ENCODE measurements at regions of chr15 and their contacts with region 1.

Region 1: GRCh38 chr15:60708684-60709083 is 229.7 kb upstream of the ICE2 start:
- DNase-seq: no peak
- H3K4me3 Mint-ChIP-seq: no peak overlapping the region
- H3K27ac Mint-ChIP-seq: no peak overlapping the region
- H3K4me1 Mint-ChIP-seq: peaks cover 29% of the 10 kb centered on the region
- H3K27me3 Mint-ChIP-seq: no peaks in the 10 kb centered on the region

Region 2: GRCh38 chr15:60682615-60683014 is 26.1 kb before region 1 on chr15:
- CTCF ChIA-PET with region 1: no interaction called
- POLR2A ChIA-PET with region 1: no interaction called
- DNase-seq: no peak
- H3K4me3 Mint-ChIP-seq: no peak overlapping the region
- H3K27ac Mint-ChIP-seq: no peak overlapping the region
- H3K4me1 Mint-ChIP-seq: no peaks in the 10 kb centered on the region
- H3K27me3 Mint-ChIP-seq: no peaks in the 10 kb centered on the region

Region 3: GRCh38 chr15:60720493-60721256 is 12.0 kb after region 1 on chr15:
- CTCF ChIA-PET with region 1: interaction called, 5 read pairs
- POLR2A ChIA-PET with region 1: interaction called, 40 read pairs
- DNase-seq: peak; percentile 46
- H3K4me3 Mint-ChIP-seq: peak overlapping the region; percentile 48
- H3K27ac Mint-ChIP-seq: peak overlapping the region; percentile 73
- H3K4me1 Mint-ChIP-seq: peaks cover 43% of the 10 kb centered on the region
- H3K27me3 Mint-ChIP-seq: peaks cover 2% of the 10 kb centered on the region

Region 4: DNA sequence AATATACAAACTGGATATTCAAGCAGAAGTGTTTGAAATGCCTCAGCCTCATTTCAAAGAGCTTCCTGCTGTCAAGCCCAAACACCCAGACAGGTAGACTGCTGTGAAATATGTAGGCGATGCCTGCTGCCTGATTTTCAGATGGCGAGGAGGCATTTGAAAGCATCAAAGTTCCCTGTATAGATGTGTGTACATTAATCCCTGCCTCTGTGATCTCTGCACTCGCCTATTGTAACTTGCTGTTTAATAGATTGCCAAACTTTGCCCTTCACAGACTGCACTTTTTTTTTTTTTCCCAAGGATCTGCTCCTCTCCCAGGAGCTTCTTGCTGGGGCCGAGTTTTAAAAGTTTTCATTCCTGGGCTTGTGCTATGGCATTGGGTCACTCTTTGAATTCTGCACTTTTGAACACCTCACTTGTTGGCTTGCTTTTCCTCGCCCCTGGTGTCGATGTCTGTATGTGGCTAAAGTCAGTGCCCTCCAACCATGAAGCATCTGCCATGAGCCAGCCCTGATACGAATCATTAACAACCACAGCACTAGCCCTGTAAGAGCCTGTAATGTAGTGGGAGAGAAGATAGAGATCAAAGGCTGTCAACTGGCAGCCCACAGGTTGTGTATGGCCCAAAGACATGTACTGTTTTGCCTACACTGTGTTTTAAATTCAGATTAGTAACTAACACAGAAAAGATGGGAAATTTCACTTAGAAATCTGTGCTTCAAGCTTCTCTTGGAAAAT is 57.9 kb after region 1 on chr15:
- CTCF ChIA-PET with region 1: no interaction called
- POLR2A ChIA-PET with region 1: no interaction called
- DNase-seq: no peak
- H3K4me3 Mint-ChIP-seq: no peak overlapping the region
- H3K27ac Mint-ChIP-seq: no peak overlapping the region
- H3K4me1 Mint-ChIP-seq: peaks cover 3% of the 10 kb centered on the region
- H3K27me3 Mint-ChIP-seq: peaks cover 2% of the 10 kb centered on the region

Measured in activated CD4-positive, alpha-beta memory T cell treated with anti-CD3 and anti-CD28 coated beads, Interleukin-2, amount 10 ng/mL, durations not matched to agents 7 days and 5 days (primary cell).